ENCODE measurements at regions of chr17 and their contacts with region 1.

Region 1: DNA sequence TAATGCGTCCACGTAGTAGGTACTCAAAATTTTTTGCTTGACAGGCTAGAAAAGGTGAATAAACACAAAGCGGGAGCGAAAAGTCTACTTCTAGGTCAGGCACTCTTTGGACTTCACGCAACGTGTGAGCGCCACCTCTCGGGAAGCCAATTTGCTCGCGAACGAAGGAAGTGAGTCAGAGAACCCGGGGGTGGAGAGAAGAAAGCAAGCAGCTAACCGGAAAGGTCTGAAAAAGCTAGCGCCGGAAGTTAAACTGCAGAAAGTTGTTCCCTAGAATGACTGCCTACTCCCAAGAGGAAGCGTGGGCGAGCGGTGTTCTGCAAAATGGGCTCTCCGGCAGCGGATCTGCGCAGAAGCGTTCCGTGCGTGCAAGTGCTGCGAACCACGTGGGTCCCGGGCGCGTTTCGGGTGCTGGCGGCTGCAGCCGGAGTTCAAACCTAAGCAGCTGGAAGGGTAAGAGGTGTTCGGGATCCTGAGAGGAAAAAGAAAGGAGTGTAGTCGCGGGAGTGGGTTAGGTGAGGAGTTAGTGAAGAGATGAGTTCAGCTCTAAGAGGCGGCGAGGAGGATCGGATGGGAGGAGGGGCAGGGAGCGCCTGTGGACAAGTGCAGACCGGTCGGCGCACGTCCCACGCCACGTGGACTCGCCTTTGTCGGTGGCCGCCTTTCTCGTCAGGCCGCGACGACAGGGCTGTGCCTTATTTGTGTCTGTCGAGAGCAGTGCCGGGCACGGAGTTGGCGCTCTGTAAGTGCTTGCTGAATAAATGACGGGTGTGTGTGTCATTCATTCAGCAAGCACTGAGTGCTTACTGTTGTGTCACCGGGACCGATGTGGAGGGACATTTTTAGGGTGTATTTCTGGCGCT is at the start of gene NME1:
- DNase-seq: peak; percentile 94 to 99 (median 98)
- ATAC-seq: peak; percentile 97
- H3K4me3 ChIP-seq: peak within 1 kb of the TSS; percentile 78
- H3K4me3 Mint-ChIP-seq: no peak within 1 kb of the TSS
- H3K27ac ChIP-seq: peak within 1 kb of the TSS; percentile 75
- H3K27ac Mint-ChIP-seq: no peak within 1 kb of the TSS
- H3K4me1 ChIP-seq: peaks cover 15% of the 10 kb centered on the region in 2 donors
- H3K4me1 Mint-ChIP-seq: peaks cover 0 to 15% (median 6%) of the 10 kb centered on the region in 7 donors
- H3K27me3 ChIP-seq: no peaks in the 10 kb centered on the region
- H3K27me3 Mint-ChIP-seq: no peaks in the 10 kb centered on the region
- total RNA-seq, gene NME1: 13.4 to 159 (median 20.1) TPM

Region 2: DNA sequence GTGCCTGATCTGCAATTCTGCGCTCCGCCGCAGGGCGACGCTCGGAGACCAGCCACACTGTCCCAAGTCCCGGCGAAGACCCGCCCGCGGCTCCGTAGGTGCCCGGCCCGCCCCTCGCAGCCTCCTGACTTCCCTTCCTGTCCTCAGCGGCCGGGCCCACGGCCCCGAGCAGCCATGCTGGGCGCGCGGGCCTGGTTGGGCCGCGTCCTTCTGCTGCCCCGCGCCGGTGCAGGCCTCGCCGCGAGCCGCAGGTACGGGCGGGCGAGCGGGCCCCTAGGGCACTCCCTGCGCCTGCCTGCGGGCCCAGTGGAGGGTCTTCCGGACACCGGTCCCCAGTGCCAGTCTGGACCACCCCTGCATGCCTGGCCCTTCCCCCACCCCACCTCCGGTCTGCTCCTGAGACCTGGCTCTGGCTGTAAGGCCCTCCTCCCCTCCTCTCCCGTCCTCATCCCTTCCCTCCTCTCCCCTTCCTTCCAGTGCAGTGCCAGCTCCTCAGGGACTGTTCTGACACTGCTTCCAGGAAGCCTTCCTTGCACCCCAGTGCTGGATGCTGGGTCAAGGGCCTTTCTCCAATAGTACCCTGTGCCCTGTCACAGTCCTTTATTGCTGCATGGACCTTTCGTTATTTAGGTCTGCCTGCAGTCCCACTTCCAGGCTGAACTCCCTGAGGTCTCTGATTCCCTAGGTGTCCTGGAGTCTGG is 606.3 kb before region 1 on chr17 and contains the start of gene SPATA20:
- CTCF ChIA-PET with region 1: no interaction called
- POLR2A ChIA-PET with region 1: no interaction called
- intact Hi-C with region 1: loop called in 1 of 2 experiments (anchors 10 kb)
- DNase-seq: peak; percentile 73 to 86 (median 83)
- ATAC-seq: peak; percentile 90
- H3K4me3 ChIP-seq: peak within 1 kb of the TSS; percentile 65
- H3K4me3 Mint-ChIP-seq: peak within 1 kb of the TSS; percentile 52 to 85 (median 76)
- H3K27ac ChIP-seq: peak within 1 kb of the TSS; percentile 66
- H3K27ac Mint-ChIP-seq: peak within 1 kb of the TSS in 5 of 9 donors; percentile 37 to 87 (median 81)
- H3K4me1 ChIP-seq: peaks cover 11% of the 10 kb centered on the region in 2 donors
- H3K4me1 Mint-ChIP-seq: peaks cover 0 to 25% (median 20%) of the 10 kb centered on the region in 7 donors
- H3K27me3 ChIP-seq: no peaks in the 10 kb centered on the region
- H3K27me3 Mint-ChIP-seq: peaks cover 0 to 28% (median 7%) of the 10 kb centered on the region in 5 donors
- total RNA-seq, gene SPATA20: 14.3 to 19.4 (median 16.4) TPM

Region 3: GRCh38 chr17:50719144-50719923 is 434.1 kb before region 1 on chr17 and contains the start of gene LUC7L3:
- CTCF ChIA-PET with region 1: no interaction called
- POLR2A ChIA-PET with region 1: no interaction called
- intact Hi-C with region 1: loop called (anchors 1 to 2 kb)
- DNase-seq: peak; percentile 88 to 97 (median 95)
- ATAC-seq: peak; percentile 98
- H3K4me3 ChIP-seq: peak within 1 kb of the TSS; percentile 92
- H3K4me3 Mint-ChIP-seq: peak within 1 kb of the TSS; percentile 84 to 99 (median 98)
- H3K27ac ChIP-seq: peak within 1 kb of the TSS; percentile 95
- H3K27ac Mint-ChIP-seq: peak within 1 kb of the TSS; percentile 93 to 100 (median 99)
- H3K4me1 ChIP-seq: peaks cover 22 to 26% of the 10 kb centered on the region in 2 donors
- H3K4me1 Mint-ChIP-seq: peaks cover 19 to 37% (median 27%) of the 10 kb centered on the region in 7 donors
- H3K27me3 ChIP-seq: no peaks in the 10 kb centered on the region
- H3K27me3 Mint-ChIP-seq: no peaks in the 10 kb centered on the region
- total RNA-seq, gene LUC7L3: 131 to 331 (median 149) TPM

Region 4: GRCh38 chr17:50816771-50817751 is 336.4 kb before region 1 on chr17:
- CTCF ChIA-PET with region 1: no interaction called
- POLR2A ChIA-PET with region 1: no interaction called
- intact Hi-C with region 1: loop called in 1 of 2 experiments (anchors 1 kb)
- DNase-seq: peak in 8 of 9 donors; percentile 32 to 67 (median 50)
- ATAC-seq: peak; percentile 88
- H3K4me3 ChIP-seq: no peak overlapping the region
- H3K4me3 Mint-ChIP-seq: peak overlapping the region in 3 of 10 donors; percentile 26 to 38 (median 32)
- H3K27ac ChIP-seq: no peak overlapping the region
- H3K27ac Mint-ChIP-seq: no peak overlapping the region
- H3K4me1 ChIP-seq: no peaks in the 10 kb centered on the region
- H3K4me1 Mint-ChIP-seq: peaks cover 0 to 9% (median 3%) of the 10 kb centered on the region in 7 donors
- H3K27me3 ChIP-seq: no peaks in the 10 kb centered on the region
- H3K27me3 Mint-ChIP-seq: peaks cover 6 to 33% (median 13%) of the 10 kb centered on the region in 5 donors

Region 5: DNA sequence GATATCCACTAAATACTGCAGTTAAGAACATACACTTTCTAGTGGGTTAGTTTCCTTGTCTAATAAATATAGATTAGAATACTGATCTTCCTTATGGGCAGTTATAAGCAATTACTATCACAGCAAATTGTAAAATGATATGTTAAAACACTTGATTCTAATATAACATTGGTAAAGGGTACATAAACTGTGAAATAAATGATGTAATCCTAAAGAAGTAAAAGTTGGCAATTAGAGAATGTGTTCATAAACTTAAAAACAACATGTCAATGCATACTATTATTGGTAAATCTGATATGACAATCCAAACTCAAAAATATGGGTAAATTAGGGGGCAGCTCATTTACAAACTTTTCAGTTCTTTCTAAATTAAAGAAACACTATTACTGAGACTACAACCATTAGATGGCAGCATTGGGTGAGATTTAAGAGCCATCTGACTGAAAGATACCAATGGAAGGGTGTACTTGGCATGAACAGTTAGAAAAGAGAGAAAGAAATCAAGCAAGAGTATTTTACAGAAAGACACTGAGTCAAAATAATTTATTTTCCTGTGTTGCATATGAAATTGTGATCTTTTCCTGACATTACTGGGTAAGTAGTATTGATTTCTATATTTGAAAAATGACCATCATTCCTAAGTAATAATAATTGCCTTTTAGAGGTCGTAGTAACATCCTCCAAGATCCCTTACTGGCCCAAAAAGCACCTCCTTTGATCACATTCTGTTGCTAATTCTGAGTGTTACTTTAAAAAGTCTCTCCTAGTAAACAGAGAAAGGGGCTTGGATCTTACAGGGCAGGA is 152.4 kb before region 1 on chr17:
- CTCF ChIA-PET with region 1: interaction called, 68 read pairs
- POLR2A ChIA-PET with region 1: interaction called, 7 read pairs
- intact Hi-C with region 1: loop called (anchors 1 kb)
- DNase-seq: peak in 7 of 9 donors; percentile 55 to 74 (median 65)
- ATAC-seq: peak; percentile 82
- H3K4me3 ChIP-seq: no peak overlapping the region
- H3K4me3 Mint-ChIP-seq: no peak overlapping the region
- H3K27ac ChIP-seq: no peak overlapping the region
- H3K27ac Mint-ChIP-seq: peak overlapping the region in 3 of 9 donors; percentile 11 to 60 (median 30)
- H3K4me1 ChIP-seq: no peaks in the 10 kb centered on the region
- H3K4me1 Mint-ChIP-seq: peaks cover 0 to 6% (median 5%) of the 10 kb centered on the region in 7 donors
- H3K27me3 ChIP-seq: no peaks in the 10 kb centered on the region
- H3K27me3 Mint-ChIP-seq: no peaks in the 10 kb centered on the region

Region 6: DNA sequence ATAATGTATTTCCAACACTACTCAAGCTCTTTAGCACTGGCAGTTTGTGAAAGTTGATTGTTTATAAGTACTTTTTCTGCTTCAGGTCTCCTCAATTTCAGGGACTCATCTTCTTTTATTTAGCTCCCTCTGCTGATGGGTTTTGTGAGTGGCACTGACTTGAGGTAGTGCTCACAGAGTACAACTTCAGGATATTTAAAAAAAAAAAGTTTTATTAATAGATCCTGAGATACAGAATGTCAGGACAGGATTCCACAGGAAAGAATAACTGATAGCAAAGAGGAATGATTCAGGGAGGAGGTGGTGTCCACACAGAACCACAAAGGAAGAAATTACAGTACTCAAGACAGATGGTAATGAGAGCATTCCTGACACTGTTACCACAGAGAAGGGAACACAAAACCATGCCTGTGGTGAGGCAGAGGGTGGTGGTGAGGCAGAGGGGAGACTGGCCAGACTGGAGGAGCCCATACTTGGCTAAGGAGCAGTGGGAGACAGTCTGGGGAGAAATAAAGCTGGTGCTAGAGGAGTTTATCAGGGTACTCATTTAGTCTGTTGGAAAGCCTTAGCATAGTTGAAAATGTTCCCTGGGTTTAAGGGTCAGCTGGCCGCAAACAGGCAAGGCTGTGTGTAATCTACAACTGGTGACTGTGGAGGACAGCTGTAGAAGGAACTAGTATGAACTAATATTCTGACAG is 96.5 kb before region 1 on chr17:
- CTCF ChIA-PET with region 1: interaction called, 8 read pairs
- POLR2A ChIA-PET with region 1: no interaction called
- intact Hi-C with region 1: loop called (anchors 1 kb)
- DNase-seq: peak in 7 of 9 donors; percentile 23 to 55 (median 44)
- ATAC-seq: peak; percentile 75
- H3K4me3 ChIP-seq: no peak overlapping the region
- H3K4me3 Mint-ChIP-seq: no peak overlapping the region
- H3K27ac ChIP-seq: no peak overlapping the region
- H3K27ac Mint-ChIP-seq: peak overlapping the region in 1 of 9 donors; percentile 84
- H3K4me1 ChIP-seq: no peaks in the 10 kb centered on the region
- H3K4me1 Mint-ChIP-seq: peaks cover 4 to 16% (median 12%) of the 10 kb centered on the region in 7 donors
- H3K27me3 ChIP-seq: no peaks in the 10 kb centered on the region
- H3K27me3 Mint-ChIP-seq: no peaks in the 10 kb centered on the region

Region 7: DNA sequence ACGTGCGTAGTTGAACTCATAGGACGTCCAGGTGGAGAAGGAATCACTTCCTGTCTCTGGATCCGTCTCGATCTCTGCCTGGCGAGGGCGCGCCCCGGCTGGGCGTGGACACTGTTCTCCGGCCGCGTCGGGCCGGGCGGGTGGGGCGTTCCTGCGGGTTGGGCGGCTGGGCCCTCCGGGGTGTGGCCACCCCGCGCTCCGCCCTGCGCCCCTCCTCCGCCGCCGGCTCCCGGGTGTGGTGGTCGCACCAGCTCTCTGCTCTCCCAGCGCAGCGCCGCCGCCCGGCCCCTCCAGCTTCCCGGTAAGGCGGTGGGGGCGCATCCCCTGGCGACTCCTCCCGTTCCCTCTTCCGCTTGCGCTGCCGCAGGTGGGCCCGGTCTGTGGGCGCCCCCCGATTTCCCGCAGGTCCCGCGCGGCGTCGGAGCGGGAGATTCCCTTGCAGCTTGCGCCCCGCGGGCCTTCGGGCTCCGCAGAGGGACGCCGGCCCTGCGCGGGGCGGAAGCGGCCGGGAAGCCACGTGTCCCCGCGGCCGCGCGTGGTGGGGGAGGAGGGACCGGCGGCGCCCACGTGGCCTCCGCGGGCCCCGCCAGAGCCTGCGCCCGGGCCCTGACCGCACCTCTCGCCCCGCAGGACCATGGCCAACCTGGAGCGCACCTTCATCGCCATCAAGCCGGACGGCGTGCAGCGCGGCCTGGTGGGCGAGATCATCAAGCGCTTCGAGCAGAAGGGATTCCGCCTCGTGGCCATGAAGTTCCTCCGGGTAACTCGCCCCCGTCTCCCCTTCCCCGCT is 13.0 kb after region 1 on chr17 and contains the start of gene NME2:
- CTCF ChIA-PET with region 1: interaction called, 5 read pairs
- POLR2A ChIA-PET with region 1: interaction called, 26 read pairs
- intact Hi-C with region 1: loop called (anchors 1 kb)
- DNase-seq: peak; percentile 42 to 87 (median 50)
- ATAC-seq: peak; percentile 85
- H3K4me3 ChIP-seq: peak within 1 kb of the TSS; percentile 89
- H3K4me3 Mint-ChIP-seq: peak within 1 kb of the TSS; percentile 87 to 98 (median 95)
- H3K27ac ChIP-seq: peak within 1 kb of the TSS; percentile 80
- H3K27ac Mint-ChIP-seq: peak within 1 kb of the TSS; percentile 89 to 99 (median 95)
- H3K4me1 ChIP-seq: peaks cover 0 to 5% of the 10 kb centered on the region in 2 donors
- H3K4me1 Mint-ChIP-seq: peaks cover 0 to 36% (median 24%) of the 10 kb centered on the region in 7 donors
- H3K27me3 ChIP-seq: no peaks in the 10 kb centered on the region
- H3K27me3 Mint-ChIP-seq: no peaks in the 10 kb centered on the region
- total RNA-seq, gene NME2: 133 to 457 (median 179) TPM

Measured in naive thymus-derived CD4-positive, alpha-beta T cell (primary cell).